Activated T-helper 1 cell treated with anti-CD3 and anti-CD28 coated beads, Interleukin-12 subunit alpha, Interleukin-12 subunit beta, Interleukin-2, Interleukin-4 antibody, amounts not matched to agents 30 ng/mL and 10 ng/mL and 1 ng/mL, durations not matched to agents 14 hours and 24 hours and 36 hours (primary cell): ENCODE measurements at regions of chr4 and their contacts with region 1.

Region 1: DNA sequence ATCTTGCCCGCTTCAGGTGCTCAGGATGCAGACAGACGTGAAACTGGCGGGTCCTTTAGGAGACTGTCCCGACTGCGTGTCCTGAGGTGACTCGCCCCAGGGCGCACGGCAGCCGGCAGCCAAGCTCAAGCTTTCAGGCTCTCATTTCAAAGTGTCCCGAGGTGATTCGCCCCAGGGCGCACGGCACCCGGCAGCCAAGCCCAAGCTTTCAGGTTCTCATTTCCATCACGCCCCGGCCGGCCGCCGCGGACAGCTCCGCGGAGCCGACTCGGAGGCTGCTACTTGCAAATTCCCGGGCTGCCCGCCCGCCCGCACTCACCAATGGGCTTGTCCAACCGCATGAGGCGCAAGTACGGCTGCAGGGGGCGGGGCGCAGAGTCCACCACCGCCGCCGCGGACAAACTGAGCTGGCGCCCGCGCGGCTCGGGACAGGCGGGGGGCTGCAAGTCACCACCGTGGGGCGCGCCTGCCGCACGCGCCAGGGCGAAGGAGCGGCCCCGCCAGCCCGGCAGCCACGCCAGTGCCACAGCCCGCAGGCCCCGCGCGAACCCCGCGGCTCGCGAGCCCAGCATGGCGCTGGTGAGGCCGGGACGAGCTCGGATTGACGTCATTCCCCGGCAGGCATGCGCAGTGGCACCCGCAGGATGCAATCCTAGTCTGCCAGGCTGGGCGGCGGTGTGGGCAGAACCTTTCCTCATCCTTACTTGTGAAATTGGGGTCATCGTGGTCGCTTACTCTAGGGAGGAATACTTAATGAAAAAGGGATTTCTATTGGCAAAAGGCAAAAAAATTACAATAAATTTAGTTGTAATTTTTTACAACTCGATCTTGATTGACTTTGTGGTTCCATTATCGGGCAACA is at the start of gene COQ2:
- DNase-seq: peak; percentile 93
- H3K4me3 Mint-ChIP-seq: peak within 1 kb of the TSS; percentile 97
- H3K27ac Mint-ChIP-seq: peak within 1 kb of the TSS; percentile 99
- H3K4me1 Mint-ChIP-seq: peaks cover 48% of the 10 kb centered on the region
- H3K27me3 Mint-ChIP-seq: no peaks in the 10 kb centered on the region
- total RNA-seq, gene COQ2: 22.5 and 22.6 TPM in 2 replicates

Region 2: DNA sequence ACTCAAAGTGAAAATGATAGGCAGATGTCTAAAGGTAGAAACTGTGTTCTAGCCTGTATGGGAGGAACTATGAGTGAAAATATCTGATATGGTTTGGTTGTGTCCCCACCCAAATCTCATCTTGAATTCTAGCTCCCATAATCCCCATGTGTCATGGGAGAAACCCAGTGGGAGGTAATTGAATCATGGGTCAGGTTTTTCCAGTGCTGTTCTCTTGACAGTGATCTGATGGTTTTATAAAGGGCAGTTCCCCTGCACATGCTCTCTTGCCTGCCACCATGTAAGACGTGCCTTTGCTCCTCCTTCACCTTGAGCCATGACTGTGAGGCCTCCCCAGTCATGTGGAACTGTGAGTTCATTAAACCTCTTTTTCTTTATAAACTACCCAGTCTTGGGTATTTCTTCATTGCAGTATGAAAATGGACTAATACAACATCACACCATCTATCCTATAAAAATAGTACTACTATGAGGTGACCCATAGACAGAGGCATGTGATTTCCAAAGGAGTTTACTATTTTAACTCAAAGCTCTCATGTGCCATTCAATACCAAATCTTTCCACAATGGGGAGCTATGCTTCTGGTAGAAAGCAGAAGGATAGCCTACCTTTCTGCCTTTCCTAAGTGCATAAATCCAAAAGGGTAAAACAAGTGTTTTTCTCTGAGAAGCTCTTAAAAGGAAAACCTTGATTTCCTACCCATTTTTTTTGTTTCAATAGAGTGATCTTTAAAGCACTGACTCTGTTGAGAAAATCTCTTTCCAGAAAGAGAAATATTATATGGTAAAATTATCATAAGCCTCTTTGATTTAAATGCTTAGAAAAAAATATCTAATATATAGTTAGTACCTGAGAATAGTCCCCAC is 432.3 kb before region 1 on chr4:
- intact Hi-C with region 1: loop called (anchors 5 kb)
- DNase-seq: no peak
- H3K4me3 Mint-ChIP-seq: no peak overlapping the region
- H3K27ac Mint-ChIP-seq: peak overlapping the region; percentile 73
- H3K4me1 Mint-ChIP-seq: peaks cover 14% of the 10 kb centered on the region
- H3K27me3 Mint-ChIP-seq: no peaks in the 10 kb centered on the region

Region 3: GRCh38 chr4:82948647-82949204 is 335.7 kb before region 1 on chr4:
- intact Hi-C with region 1: no loop called
- DNase-seq: no peak
- H3K4me3 Mint-ChIP-seq: no peak overlapping the region
- H3K27ac Mint-ChIP-seq: no peak overlapping the region
- H3K4me1 Mint-ChIP-seq: no peaks in the 10 kb centered on the region
- H3K27me3 Mint-ChIP-seq: no peaks in the 10 kb centered on the region

Region 4: GRCh38 chr4:83034630-83035494 is 249.6 kb before region 1 on chr4 and contains the start of gene COPS4:
- intact Hi-C with region 1: loop called (anchors 1 kb)
- DNase-seq: peak; percentile 95
- H3K4me3 Mint-ChIP-seq: peak within 1 kb of the TSS; percentile 98
- H3K27ac Mint-ChIP-seq: peak within 1 kb of the TSS; percentile 99
- H3K4me1 Mint-ChIP-seq: peaks cover 20% of the 10 kb centered on the region
- H3K27me3 Mint-ChIP-seq: peaks cover 6% of the 10 kb centered on the region
- total RNA-seq, gene COPS4: 35.8 and 38.8 TPM in 2 replicates

Region 5: GRCh38 chr4:83261307-83261706 is 23.1 kb before region 1 on chr4:
- intact Hi-C with region 1: loop called (anchors 2 kb)
- DNase-seq: no peak
- H3K4me3 Mint-ChIP-seq: no peak overlapping the region
- H3K27ac Mint-ChIP-seq: peak overlapping the region; percentile 73
- H3K4me1 Mint-ChIP-seq: no peaks in the 10 kb centered on the region
- H3K27me3 Mint-ChIP-seq: no peaks in the 10 kb centered on the region

Region 6: DNA sequence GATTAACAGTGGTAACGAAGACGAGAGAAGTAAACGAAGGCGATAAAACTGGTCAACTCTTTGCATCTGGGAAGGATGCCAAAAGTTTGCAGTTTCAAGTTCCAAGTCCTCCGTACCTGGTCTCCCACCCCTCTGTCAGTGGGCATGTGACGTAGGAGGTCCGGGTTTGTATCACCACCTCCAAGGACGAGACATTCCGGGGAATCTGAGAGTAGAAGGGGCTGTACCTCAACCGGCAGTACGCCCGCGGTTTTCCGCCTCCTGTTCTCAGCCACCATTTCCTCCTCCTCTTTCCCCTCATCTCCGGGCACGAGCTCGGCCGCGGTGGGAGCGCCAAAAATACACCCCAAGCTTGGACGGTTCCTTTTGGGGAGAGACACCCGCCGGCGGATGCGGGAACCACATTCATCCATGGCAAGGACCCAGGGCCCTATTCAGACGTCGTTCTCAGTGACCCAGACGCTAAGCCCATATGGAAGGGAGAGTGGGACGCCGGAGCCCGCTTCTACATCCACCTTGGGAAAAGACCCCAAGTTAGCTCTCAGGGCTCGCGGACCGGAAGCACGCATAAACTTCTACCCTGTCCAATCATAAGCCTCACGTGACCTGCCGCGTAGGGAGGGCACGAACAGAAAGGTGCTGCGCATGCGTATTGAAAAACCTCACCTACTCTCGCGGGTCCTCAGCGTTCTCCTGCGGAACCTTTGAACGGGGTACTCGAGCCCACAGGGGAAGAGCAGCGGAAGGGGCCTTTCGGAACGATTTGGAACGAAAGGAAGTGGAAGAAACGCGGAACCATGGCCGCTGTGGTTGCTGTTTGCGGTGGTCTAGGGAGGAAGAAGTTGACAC is 171.1 kb after region 1 on chr4 and contains the starts of genes HELQ and MRPS18C:
- intact Hi-C with region 1: loop called (anchors 1 kb)
- DNase-seq: peak; percentile 95
- H3K4me3 Mint-ChIP-seq: peak within 1 kb of the TSS; percentile 96
- H3K27ac Mint-ChIP-seq: peak within 1 kb of the TSS; percentile 98
- H3K4me1 Mint-ChIP-seq: peaks cover 45% of the 10 kb centered on the region
- H3K27me3 Mint-ChIP-seq: no peaks in the 10 kb centered on the region
- total RNA-seq, gene HELQ: 8.8 and 9.7 TPM in 2 replicates
- total RNA-seq, gene MRPS18C: 76.8 and 80.3 TPM in 2 replicates